Heart right ventricle (tissue), 16 donors: ENCODE measurements at regions of chr3 and their contacts with region 1.

Region 1: GRCh38 chr3:152471814-152472671 is 203.3 kb downstream of the MBNL1 start:
- DNase-seq: peak in 1 of 2 donors; percentile 80
- ATAC-seq: peak; percentile 69 to 89 (median 78)
- H3K4me3 ChIP-seq: peak overlapping the region in 6 of 10 donors; percentile 20 to 40 (median 32)
- H3K27ac ChIP-seq: peak overlapping the region in 2 of 10 donors; percentile 3 to 35
- H3K4me1 ChIP-seq: peaks cover 0 to 5% (median 0%) of the 10 kb centered on the region in 9 donors
- H3K27me3 ChIP-seq: no peaks in the 10 kb centered on the region
- CTCF ChIP-seq: peak; percentile 53 to 88 (median 75)

Region 2: DNA sequence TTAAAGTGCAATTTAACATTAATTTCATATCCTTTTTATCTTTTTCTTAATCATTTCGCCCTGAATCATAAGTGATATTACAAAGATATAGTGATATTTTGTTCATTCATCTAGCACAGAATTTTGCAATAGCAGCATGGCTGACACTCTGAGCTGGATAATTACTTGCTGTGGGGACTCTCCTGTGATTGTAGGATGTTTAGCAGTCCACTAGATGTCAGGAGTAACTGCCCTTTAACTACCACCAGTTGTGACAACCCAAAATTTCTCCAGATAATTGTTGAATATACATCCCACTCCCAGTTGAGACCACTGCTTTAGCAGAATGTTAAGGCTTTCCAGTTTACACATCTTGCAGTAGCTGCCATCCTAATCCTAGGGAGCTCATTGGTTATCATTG is 400.1 kb before region 1 on chr3:
- intact Hi-C with region 1: loop called in 4 of 10 experiments (anchors 10 kb)
- DNase-seq: no peak
- ATAC-seq: peak in 4 of 8 donors; percentile 58 to 75 (median 60)
- H3K4me3 ChIP-seq: no peak overlapping the region
- H3K27ac ChIP-seq: no peak overlapping the region
- H3K4me1 ChIP-seq: peaks cover 0 to 7% (median 0%) of the 10 kb centered on the region in 9 donors
- H3K27me3 ChIP-seq: no peaks in the 10 kb centered on the region
- CTCF ChIP-seq: peak in 8 of 9 donors; percentile 12 to 66 (median 56)

Region 3: GRCh38 chr3:152524198-152525140 is 52.4 kb after region 1 on chr3:
- intact Hi-C with region 1: loop called in 6 of 10 experiments (anchors 5 to 10 kb)
- DNase-seq: peak in 1 of 2 donors; percentile 59
- ATAC-seq: no peak
- H3K4me3 ChIP-seq: no peak overlapping the region
- H3K27ac ChIP-seq: no peak overlapping the region
- H3K4me1 ChIP-seq: peaks cover 0 to 3% (median 0%) of the 10 kb centered on the region in 9 donors
- H3K27me3 ChIP-seq: no peaks in the 10 kb centered on the region
- CTCF ChIP-seq: peak; percentile 60 to 92 (median 86)

Region 4: GRCh38 chr3:152915695-152916094 is 443.7 kb after region 1 on chr3:
- intact Hi-C with region 1: no loop called
- DNase-seq: no peak
- ATAC-seq: no peak
- H3K4me3 ChIP-seq: no peak overlapping the region
- H3K27ac ChIP-seq: no peak overlapping the region
- H3K4me1 ChIP-seq: no peaks in the 10 kb centered on the region
- H3K27me3 ChIP-seq: no peaks in the 10 kb centered on the region
- CTCF ChIP-seq: no peak